ENCODE measurements at regions of chr6 and their contacts with region 1.

Region 1: GRCh38 chr6:166382933-166383801 is at the start of gene MPC1:
- DNase-seq: peak; percentile 96
- H3K4me3 Mint-ChIP-seq: peak within 1 kb of the TSS; percentile 85
- H3K27ac Mint-ChIP-seq: peak within 1 kb of the TSS; percentile 88
- H3K4me1 Mint-ChIP-seq: no peaks in the 10 kb centered on the region
- H3K27me3 Mint-ChIP-seq: no peaks in the 10 kb centered on the region
- CTCF ChIP-seq: no peak
- total RNA-seq, gene MPC1: 31.8 and 33.1 TPM in 2 replicates

Region 2: DNA sequence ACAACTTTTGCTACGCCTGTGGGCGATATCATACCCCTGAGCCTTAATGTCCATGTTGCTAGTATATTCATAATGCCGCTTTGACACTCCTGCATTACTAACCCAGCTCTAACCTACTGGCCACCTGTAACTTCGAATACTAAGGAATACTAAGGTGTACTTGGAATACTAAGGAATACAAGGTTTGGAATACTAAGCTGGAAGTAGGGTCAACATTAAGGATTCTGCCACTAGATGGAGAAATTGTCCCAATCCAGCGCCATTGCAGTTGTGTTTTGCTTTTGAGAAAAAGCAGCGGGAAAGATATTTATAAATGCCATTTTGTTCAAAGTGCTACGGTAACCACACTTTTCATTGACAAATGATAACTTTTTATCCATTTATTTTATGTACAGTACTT is 226.2 kb before region 1 on chr6:
- CTCF ChIA-PET with region 1: interaction called, 8 read pairs
- POLR2A ChIA-PET with region 1: no interaction called
- intact Hi-C with region 1: loop called (anchors 5 kb)
- DNase-seq: peak; percentile 33
- H3K4me3 Mint-ChIP-seq: no peak overlapping the region
- H3K27ac Mint-ChIP-seq: no peak overlapping the region
- H3K4me1 Mint-ChIP-seq: no peaks in the 10 kb centered on the region
- H3K27me3 Mint-ChIP-seq: no peaks in the 10 kb centered on the region
- CTCF ChIP-seq: peak; percentile 44

Region 3: DNA sequence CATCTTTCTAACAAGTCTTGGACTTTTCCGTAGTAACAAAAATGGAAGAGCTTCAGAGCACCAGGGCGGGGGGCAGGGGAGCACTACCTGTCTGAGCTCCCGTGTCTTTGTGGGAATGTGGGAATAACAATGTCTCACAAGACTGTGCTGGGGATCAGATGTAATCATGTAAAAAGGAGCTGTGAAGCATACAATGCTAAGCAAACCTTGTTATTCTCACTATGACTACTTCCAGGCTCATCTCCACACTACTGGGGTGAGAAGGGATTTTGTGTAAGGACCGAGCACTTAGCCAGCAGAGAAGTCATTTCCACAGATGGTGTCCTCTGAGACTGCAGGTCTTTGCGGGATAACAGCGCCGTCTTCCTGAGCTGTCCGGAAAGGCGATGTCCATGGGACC is 102.1 kb before region 1 on chr6:
- CTCF ChIA-PET with region 1: interaction called, 57 read pairs
- POLR2A ChIA-PET with region 1: interaction called, 4 read pairs
- intact Hi-C with region 1: no loop called
- DNase-seq: no peak
- H3K4me3 Mint-ChIP-seq: no peak overlapping the region
- H3K27ac Mint-ChIP-seq: no peak overlapping the region
- H3K4me1 Mint-ChIP-seq: no peaks in the 10 kb centered on the region
- H3K27me3 Mint-ChIP-seq: peaks cover 56% of the 10 kb centered on the region
- CTCF ChIP-seq: no peak

Region 4: DNA sequence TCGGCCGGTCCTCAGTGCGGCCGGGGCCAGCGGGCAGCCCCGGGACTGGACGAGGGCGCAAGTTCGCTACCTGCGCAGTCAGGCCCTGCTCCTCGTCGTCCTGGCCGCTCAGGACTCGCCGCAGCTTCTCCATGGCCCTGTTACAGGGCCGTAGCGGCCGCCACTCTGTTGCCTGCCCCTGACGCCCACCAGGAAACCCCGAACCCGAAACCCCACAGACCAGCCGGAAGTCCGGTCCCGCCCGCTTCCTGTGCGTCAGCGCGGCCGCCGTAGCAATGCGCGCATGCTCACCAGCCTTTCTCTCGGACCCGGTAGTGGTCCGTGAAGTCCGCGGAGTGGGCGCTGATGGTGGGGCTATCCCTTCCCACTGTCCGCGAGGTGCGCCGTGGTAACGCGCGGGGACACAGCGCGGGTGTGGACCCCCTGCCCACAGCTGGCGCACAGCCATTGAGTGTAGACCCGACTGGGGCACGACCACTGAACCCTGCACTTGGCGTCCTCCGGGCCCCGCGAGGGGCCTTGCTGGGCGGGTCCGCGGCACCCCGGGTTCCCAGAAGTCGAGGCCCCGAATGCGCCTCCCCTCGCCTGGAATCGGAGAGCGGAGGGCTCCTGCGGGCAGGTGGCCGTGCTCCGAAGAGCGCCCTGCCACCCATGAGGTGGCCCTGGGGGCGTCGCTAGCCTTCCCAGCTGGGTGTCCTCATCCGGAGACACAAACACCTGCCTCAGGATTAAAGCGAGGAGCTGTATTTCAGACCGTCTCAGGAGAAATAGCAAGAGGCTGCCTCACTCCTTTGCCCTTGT is 40.6 kb before region 1 on chr6 and contains the start of gene SFT2D1:
- CTCF ChIA-PET with region 1: interaction called, 8 read pairs
- POLR2A ChIA-PET with region 1: interaction called, 37 read pairs
- intact Hi-C with region 1: loop called (anchors 1 kb)
- DNase-seq: peak; percentile 75
- H3K4me3 Mint-ChIP-seq: peak within 1 kb of the TSS; percentile 87
- H3K27ac Mint-ChIP-seq: peak within 1 kb of the TSS; percentile 89
- H3K4me1 Mint-ChIP-seq: peaks cover 6% of the 10 kb centered on the region
- H3K27me3 Mint-ChIP-seq: no peaks in the 10 kb centered on the region
- CTCF ChIP-seq: no peak
- total RNA-seq, gene SFT2D1: 39.5 and 43.3 TPM in 2 replicates

Region 5: DNA sequence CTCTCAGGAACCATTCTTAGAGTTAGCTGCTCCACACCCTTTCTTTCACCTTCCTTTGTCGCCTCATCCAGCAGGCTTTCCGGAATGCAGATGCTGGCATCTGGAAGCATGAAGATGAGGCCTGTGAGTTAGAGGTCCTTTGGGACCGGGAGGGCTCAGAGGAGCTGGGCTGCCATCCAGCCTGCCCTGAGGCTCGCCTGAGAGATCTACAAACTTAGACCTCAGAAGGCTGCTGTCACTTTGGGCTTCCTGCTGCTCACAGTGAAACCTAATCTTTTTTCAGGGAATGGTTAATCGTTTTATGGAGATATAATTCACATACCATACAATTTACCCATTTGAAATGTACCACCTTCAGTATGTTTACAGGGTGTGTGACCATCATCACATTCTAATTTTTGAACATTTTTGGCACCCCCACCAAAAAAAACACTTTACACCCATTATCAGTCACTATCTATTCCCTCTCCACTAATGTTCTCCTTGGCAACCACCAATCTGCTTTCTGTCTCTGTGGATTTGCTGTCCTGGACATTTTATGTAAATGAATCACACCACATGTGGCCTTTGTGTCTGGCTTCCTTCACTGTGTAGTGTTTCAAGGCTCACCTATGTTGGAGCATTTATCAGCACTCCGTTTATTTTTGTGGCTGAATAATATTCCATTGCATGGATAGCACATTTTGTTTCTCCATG is 19.6 kb after region 1 on chr6:
- CTCF ChIA-PET with region 1: interaction called, 23 read pairs
- POLR2A ChIA-PET with region 1: interaction called, 5 read pairs
- intact Hi-C with region 1: no loop called
- DNase-seq: no peak
- H3K4me3 Mint-ChIP-seq: no peak overlapping the region
- H3K27ac Mint-ChIP-seq: no peak overlapping the region
- H3K4me1 Mint-ChIP-seq: peaks cover 8% of the 10 kb centered on the region
- H3K27me3 Mint-ChIP-seq: no peaks in the 10 kb centered on the region
- CTCF ChIP-seq: no peak

Region 6: GRCh38 chr6:166707045-166707444 is 323.9 kb after region 1 on chr6:
- CTCF ChIA-PET with region 1: no interaction called
- POLR2A ChIA-PET with region 1: no interaction called
- intact Hi-C with region 1: no loop called
- DNase-seq: peak; percentile 28
- H3K4me3 Mint-ChIP-seq: no peak overlapping the region
- H3K27ac Mint-ChIP-seq: no peak overlapping the region
- H3K4me1 Mint-ChIP-seq: no peaks in the 10 kb centered on the region
- H3K27me3 Mint-ChIP-seq: peaks cover 28% of the 10 kb centered on the region
- CTCF ChIP-seq: no peak

Region 7: DNA sequence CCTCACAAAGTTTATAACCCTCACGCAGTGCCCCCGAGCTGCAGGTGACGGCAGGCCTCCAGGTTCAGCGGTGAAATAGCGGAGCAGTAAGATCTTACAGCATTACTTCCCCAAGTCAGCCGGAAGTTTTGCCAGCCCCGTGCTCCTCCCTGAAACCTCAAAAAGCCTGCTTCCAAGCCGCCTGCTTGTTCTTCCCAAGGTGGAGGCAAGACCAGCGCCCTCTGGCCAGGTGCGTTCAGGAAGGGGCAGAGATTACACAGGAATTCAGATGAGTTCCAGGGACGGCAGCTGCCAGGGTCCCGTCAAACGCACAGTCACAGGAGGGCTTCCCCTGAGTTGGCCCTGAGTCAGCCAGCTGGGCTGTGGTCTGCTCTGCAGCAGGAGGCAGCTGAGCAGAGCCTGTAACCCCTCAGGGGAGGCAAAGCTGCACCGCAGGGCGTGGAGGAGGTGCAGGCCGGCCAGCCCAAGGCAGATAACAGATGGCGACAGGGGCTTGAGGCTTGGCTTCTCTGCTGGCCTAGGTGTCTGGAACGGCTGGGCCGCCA is 368.0 kb after region 1 on chr6:
- CTCF ChIA-PET with region 1: no interaction called
- POLR2A ChIA-PET with region 1: no interaction called
- intact Hi-C with region 1: no loop called
- DNase-seq: no peak
- H3K4me3 Mint-ChIP-seq: no peak overlapping the region
- H3K27ac Mint-ChIP-seq: no peak overlapping the region
- H3K4me1 Mint-ChIP-seq: peaks cover 5% of the 10 kb centered on the region
- H3K27me3 Mint-ChIP-seq: peaks cover 10% of the 10 kb centered on the region
- CTCF ChIP-seq: no peak